Activated CD4-positive, alpha-beta memory T cell treated with anti-CD3 and anti-CD28 coated beads for 36 hours (primary cell): ENCODE measurements at regions of chr17 and their contacts with region 1.

Region 1: DNA sequence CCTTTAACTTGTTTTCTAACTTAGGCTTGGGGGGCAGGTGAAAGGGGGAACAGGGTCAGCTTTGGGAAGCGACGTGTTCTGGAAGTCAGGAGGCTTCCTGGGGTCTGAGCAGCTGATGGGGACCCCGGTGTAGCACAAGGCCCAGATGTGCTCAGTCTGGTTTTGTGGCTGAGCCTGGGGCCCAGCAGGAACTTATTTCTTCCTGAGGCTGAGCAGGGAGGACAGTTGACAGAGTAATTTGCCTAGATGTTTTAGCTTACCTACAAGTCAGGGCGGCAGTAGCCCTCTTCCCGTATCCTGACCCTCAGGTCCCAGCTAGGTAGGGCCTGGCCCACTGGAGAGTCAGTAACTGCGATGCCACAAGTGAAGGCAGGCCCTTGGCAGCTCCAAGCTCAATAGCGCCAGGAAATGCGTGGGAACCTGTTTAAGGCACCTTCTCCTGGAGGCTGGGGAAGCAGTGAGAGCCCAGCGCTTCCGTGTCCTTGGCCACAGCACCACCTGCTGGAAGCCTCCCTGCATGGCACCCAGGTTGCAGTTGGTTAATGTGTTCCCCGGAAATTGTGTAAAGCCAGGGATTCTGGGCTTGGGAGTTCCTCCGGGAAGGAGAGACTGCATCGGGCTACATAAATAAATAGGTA is 5.2 kb downstream of the CCR7 start:
- DNase-seq: peak; percentile 90
- H3K4me3 Mint-ChIP-seq: peak overlapping the region; percentile 93
- H3K27ac Mint-ChIP-seq: peak overlapping the region; percentile 96
- H3K4me1 Mint-ChIP-seq: peaks cover 80% of the 10 kb centered on the region
- H3K27me3 Mint-ChIP-seq: no peaks in the 10 kb centered on the region

Region 2: DNA sequence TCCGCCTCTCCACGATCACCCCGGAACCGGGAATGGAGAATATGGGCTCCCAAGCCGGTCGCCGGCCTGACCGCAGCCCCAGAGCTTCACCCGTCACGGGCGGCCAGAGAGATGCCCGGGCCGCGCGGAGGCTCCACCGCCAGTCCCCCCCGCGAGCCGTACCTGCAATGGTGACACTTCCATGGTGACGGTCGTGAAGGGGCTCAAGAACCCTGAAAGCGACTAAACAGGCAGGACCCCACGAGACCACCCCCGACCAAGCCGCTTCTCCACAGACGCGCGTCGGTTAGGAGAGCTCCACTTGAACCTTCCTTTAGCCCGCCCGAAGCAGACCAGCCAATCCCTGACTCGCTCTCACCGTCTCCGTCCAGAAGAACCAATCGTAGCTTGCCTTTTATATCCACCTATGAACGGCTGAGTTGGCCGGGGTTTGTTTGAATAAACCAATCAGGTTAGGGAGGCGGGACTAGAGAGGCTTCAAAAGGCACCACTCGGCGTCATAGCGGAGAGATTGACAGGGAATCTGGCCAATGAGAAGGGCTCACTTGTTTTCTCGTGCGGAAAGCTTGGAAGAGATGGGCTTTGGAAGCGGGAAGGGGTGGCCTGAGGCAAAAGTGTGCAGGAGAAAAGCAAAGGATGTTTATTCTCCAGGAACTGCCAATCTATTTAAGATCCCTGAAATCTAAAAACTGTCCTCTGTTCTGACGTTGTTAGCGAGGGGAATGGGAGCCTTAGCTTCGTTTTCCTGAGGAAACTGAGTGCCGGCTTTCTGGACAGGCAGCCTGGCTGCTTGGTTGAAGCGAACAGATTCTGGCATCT is 142.3 kb before region 1 on chr17 and contains the start of gene TOP2A:
- CTCF ChIA-PET with region 1: interaction called, 25 read pairs
- POLR2A ChIA-PET with region 1: interaction called, 10 read pairs
- intact Hi-C with region 1: no loop called
- DNase-seq: peak; percentile 98
- H3K4me3 Mint-ChIP-seq: peak within 1 kb of the TSS; percentile 99
- H3K27ac Mint-ChIP-seq: peak within 1 kb of the TSS; percentile 89
- H3K4me1 Mint-ChIP-seq: peaks cover 30% of the 10 kb centered on the region
- H3K27me3 Mint-ChIP-seq: no peaks in the 10 kb centered on the region
- total RNA-seq, gene TOP2A: 301 to 311 TPM

Region 3: GRCh38 chr17:40480501-40481003 is 79.5 kb before region 1 on chr17:
- CTCF ChIA-PET with region 1: interaction called, 17 read pairs
- POLR2A ChIA-PET with region 1: interaction called, 7 read pairs
- intact Hi-C with region 1: loop called (anchors 1 kb)
- DNase-seq: peak; percentile 95
- H3K4me3 Mint-ChIP-seq: peak overlapping the region; percentile 76
- H3K27ac Mint-ChIP-seq: peak overlapping the region; percentile 98
- H3K4me1 Mint-ChIP-seq: peaks cover 70% of the 10 kb centered on the region
- H3K27me3 Mint-ChIP-seq: no peaks in the 10 kb centered on the region

Region 4: GRCh38 chr17:40582328-40582901 is 22.3 kb after region 1 on chr17:
- CTCF ChIA-PET with region 1: interaction called, 9 read pairs
- POLR2A ChIA-PET with region 1: interaction called, 27 read pairs
- intact Hi-C with region 1: loop called (anchors 1 kb)
- DNase-seq: peak; percentile 82
- H3K4me3 Mint-ChIP-seq: peak overlapping the region; percentile 38
- H3K27ac Mint-ChIP-seq: peak overlapping the region; percentile 21
- H3K4me1 Mint-ChIP-seq: peaks cover 82% of the 10 kb centered on the region
- H3K27me3 Mint-ChIP-seq: no peaks in the 10 kb centered on the region

Region 5: GRCh38 chr17:40615295-40615988 is 55.4 kb after region 1 on chr17:
- CTCF ChIA-PET with region 1: interaction called, 172 read pairs
- POLR2A ChIA-PET with region 1: interaction called, 169 read pairs
- intact Hi-C with region 1: loop called (anchors 1 kb)
- DNase-seq: peak; percentile 57
- H3K4me3 Mint-ChIP-seq: peak overlapping the region; percentile 23
- H3K27ac Mint-ChIP-seq: peak overlapping the region; percentile 79
- H3K4me1 Mint-ChIP-seq: peaks cover 74% of the 10 kb centered on the region
- H3K27me3 Mint-ChIP-seq: no peaks in the 10 kb centered on the region

Region 6: DNA sequence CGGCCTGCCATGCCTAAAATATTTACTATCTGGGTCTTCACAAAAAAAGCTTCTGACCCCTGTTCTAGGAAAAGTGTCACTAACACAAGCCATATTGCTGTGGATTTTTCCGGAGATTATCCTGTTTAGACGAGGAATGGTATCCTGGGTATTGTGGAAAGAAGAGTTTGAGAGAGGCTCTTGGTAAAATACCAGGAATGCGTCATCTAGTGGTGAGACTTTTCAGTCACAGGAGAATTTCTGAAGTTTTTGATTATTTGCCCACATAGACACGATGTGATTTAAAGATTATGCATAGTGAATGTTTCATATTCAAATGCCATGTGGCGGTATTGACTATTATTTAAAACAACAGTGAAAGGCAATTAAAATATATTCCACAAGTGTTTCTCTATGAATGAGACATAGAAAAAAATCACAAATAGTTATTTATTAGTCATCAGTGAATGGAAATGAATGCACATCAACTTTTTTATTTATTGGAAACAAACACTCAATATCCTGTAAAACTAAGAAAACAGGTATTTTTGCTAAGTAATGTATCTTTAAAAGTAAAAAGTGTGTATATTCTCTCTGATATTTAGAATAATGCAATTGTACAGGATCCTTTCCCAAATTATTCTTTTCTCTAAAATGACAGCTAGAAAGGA is 231.8 kb after region 1 on chr17:
- CTCF ChIA-PET with region 1: no interaction called
- POLR2A ChIA-PET with region 1: no interaction called
- intact Hi-C with region 1: no loop called
- DNase-seq: no peak
- H3K4me3 Mint-ChIP-seq: no peak overlapping the region
- H3K27ac Mint-ChIP-seq: no peak overlapping the region
- H3K4me1 Mint-ChIP-seq: no peaks in the 10 kb centered on the region
- H3K27me3 Mint-ChIP-seq: peaks cover 21% of the 10 kb centered on the region

Region 7: GRCh38 chr17:41688699-41689496 is 1128.8 kb after region 1 on chr17 and contains the start of gene EIF1:
- CTCF ChIA-PET with region 1: interaction called, 3 read pairs
- POLR2A ChIA-PET with region 1: interaction called, 4 read pairs
- intact Hi-C with region 1: loop called (anchors 5 kb)
- DNase-seq: peak; percentile 100
- H3K4me3 Mint-ChIP-seq: peak within 1 kb of the TSS; percentile 95
- H3K27ac Mint-ChIP-seq: peak within 1 kb of the TSS; percentile 99
- H3K4me1 Mint-ChIP-seq: peaks cover 35% of the 10 kb centered on the region
- H3K27me3 Mint-ChIP-seq: no peaks in the 10 kb centered on the region
- total RNA-seq, gene EIF1: 1,052 to 1,072 TPM